Astrocyte of the cerebellum (primary cell): ENCODE measurements at regions of chr6 and their contacts with region 1.

Region 1: DNA sequence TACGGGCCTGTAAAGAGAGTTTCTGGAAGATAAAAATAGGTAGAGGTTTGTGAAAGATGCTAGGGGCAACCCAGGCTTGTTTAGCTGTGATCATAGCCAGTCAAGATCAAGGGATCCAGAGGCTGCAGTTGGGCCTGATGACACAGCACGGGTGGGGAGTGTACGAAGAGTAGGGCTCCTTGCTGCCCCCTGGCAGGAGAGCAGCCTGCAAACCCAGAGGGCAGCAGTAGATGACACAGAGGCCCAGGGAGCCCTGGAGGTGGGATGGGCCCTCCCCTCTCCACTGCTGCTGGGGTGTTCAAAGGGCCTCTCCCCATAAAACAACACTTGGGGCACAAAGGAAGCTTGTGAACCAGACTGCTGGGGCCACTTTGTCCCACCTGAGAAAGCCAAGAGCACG is 47.2 kb downstream of the VEGFA start:
- DNase-seq: no peak
- H3K4me3 ChIP-seq: no peak overlapping the region
- CTCF ChIP-seq: peak; percentile 19

Region 2: GRCh38 chr6:43916924-43917877 is 100.0 kb after region 1 on chr6:
- in situ Hi-C with region 1: loop called (anchors 5 kb)
- DNase-seq: no peak
- H3K4me3 ChIP-seq: no peak overlapping the region
- CTCF ChIP-seq: no peak